Dendritic cell treated with granulocyte-macrophage colony-stimulating factor and Interleukin-4, amounts not matched to agents 40 ng/mL and 50 ng/mL, for 4 days (primary cell): ENCODE measurements at regions of chr3 and their contacts with region 1.

Region 1: GRCh38 chr3:38346587-38347410 is at the start of gene XYLB:
- H3K4me3 Mint-ChIP-seq: peak within 1 kb of the TSS; percentile 76
- H3K27ac Mint-ChIP-seq: peak within 1 kb of the TSS; percentile 63
- H3K4me1 Mint-ChIP-seq: peaks cover 6% of the 10 kb centered on the region
- H3K27me3 Mint-ChIP-seq: peaks cover 2% of the 10 kb centered on the region

Region 2: GRCh38 chr3:38136777-38137614 is 209.8 kb before region 1 on chr3 and contains the start of gene ACAA1:
- intact Hi-C with region 1: loop called (anchors 5 kb)
- H3K4me3 Mint-ChIP-seq: peak within 1 kb of the TSS; percentile 96
- H3K27ac Mint-ChIP-seq: peak within 1 kb of the TSS; percentile 98
- H3K4me1 Mint-ChIP-seq: peaks cover 82% of the 10 kb centered on the region
- H3K27me3 Mint-ChIP-seq: no peaks in the 10 kb centered on the region

Region 3: GRCh38 chr3:38281895-38282675 is 64.7 kb before region 1 on chr3 and contains the start of gene SLC22A14:
- intact Hi-C with region 1: no loop called
- H3K4me3 Mint-ChIP-seq: no peak within 1 kb of the TSS
- H3K27ac Mint-ChIP-seq: no peak within 1 kb of the TSS
- H3K4me1 Mint-ChIP-seq: no peaks in the 10 kb centered on the region
- H3K27me3 Mint-ChIP-seq: no peaks in the 10 kb centered on the region

Region 4: GRCh38 chr3:38655708-38656300 is 309.0 kb after region 1 on chr3:
- intact Hi-C with region 1: no loop called
- H3K4me3 Mint-ChIP-seq: no peak overlapping the region
- H3K27ac Mint-ChIP-seq: no peak overlapping the region
- H3K4me1 Mint-ChIP-seq: no peaks in the 10 kb centered on the region
- H3K27me3 Mint-ChIP-seq: peaks cover 40% of the 10 kb centered on the region